ENCODE measurements at regions of chr3 and their contacts with region 1.

Region 1: DNA sequence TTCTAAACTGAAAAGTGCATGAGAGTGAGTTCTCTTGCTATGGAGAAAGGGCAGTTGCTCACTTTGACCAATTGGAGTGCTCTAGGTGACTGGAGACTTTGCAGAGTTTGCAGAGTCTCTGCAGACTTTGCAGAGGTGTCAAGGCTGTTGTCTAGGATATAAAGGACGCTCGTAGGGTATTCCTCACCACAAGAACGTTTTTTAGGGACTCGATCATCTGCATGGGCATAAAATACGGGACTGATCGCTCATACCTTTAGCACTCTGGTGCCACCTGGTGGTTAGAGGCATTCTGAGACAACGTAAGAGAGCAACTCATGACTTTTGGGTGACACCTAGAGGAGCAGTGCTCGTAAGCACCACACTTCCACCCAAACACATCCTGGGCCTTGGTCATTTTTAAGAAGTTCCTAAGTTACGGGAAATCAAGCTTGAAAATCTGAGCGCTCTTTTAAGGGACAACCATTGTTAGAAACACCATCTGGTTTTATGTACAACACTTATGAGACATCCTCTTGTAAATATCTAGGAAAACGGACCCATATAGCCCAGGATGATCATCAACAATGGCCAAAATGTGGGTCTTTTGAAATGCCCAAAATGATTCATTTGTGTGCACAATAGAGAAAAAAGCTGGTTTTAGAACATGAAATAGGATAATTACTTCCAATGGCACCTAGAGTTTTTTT is 51.6 kb upstream of the XCR1 start:
- DNase-seq: peak; percentile 97
- H3K4me3 Mint-ChIP-seq: no peak overlapping the region
- H3K27ac Mint-ChIP-seq: no peak overlapping the region
- H3K4me1 Mint-ChIP-seq: no peaks in the 10 kb centered on the region
- H3K27me3 Mint-ChIP-seq: peaks cover 14% of the 10 kb centered on the region

Region 2: GRCh38 chr3:45760878-45761711 is 317.8 kb before region 1 on chr3:
- CTCF ChIA-PET with region 1: interaction called, 18 read pairs
- intact Hi-C with region 1: loop called (anchors 1 kb)
- DNase-seq: peak; percentile 57
- H3K4me3 Mint-ChIP-seq: no peak overlapping the region
- H3K27ac Mint-ChIP-seq: no peak overlapping the region
- H3K4me1 Mint-ChIP-seq: no peaks in the 10 kb centered on the region
- H3K27me3 Mint-ChIP-seq: peaks cover 2% of the 10 kb centered on the region

Region 3: DNA sequence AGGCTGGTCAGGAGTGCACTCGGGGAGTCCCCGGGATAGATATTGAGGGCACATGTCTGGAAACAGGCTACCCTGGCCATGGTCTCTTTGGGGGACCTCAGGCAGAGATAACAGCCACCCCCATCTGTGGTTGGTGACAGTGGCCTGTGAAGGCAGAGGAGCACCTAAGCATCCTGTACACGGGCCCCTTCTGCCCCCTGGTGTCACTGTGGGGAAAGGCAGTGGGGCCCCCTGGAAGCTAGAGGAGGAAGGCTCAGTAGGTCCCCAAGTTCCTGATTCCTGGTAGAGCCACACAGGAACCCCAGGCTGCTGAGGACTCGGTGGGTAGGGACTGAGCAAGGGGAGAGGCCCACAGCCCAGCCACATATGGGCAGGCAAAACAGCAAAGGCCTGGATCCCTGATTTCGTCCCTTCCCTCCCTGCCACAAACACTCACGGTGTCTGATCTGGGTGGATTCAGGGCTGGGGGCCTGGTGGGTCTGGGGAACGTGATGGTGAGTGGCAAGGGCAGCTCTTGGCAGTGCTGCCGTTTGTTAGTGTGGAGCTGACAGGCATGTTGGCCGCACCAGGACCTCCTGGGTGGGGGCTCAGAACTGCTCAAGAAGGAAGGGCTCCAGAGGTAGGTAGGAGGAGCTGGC is 149.7 kb before region 1 on chr3:
- CTCF ChIA-PET with region 1: interaction called, 263 read pairs
- intact Hi-C with region 1: no loop called
- DNase-seq: peak; percentile 76
- H3K4me3 Mint-ChIP-seq: no peak overlapping the region
- H3K27ac Mint-ChIP-seq: no peak overlapping the region
- H3K4me1 Mint-ChIP-seq: no peaks in the 10 kb centered on the region
- H3K27me3 Mint-ChIP-seq: no peaks in the 10 kb centered on the region

Region 4: GRCh38 chr3:46065294-46065721 is 13.5 kb before region 1 on chr3:
- CTCF ChIA-PET with region 1: interaction called, 38 read pairs
- intact Hi-C with region 1: no loop called
- DNase-seq: peak; percentile 89
- H3K4me3 Mint-ChIP-seq: no peak overlapping the region
- H3K27ac Mint-ChIP-seq: no peak overlapping the region
- H3K4me1 Mint-ChIP-seq: peaks cover 67% of the 10 kb centered on the region
- H3K27me3 Mint-ChIP-seq: peaks cover 49% of the 10 kb centered on the region

Region 5: DNA sequence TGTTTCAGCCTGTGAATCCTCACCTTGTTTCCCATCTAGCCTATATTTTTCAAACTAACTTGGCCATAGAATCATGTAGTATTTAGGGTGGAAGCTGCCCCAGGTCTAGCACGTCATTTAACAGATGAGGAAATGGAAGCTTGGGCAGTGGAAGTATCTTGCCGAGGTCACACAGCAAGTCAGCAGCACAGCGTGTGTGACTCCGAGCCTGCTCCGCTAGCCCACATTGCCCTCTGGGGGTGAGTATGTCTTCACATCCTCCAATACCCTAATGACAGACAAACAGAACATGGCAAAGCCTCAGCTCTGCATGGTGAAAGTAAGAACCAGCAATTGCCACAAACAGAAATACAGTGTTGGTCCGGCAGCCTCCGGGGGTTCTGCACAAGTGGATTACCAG is 289.7 kb after region 1 on chr3:
- CTCF ChIA-PET with region 1: interaction called, 58 read pairs
- intact Hi-C with region 1: no loop called
- DNase-seq: peak; percentile 75
- H3K4me3 Mint-ChIP-seq: no peak overlapping the region
- H3K27ac Mint-ChIP-seq: no peak overlapping the region
- H3K4me1 Mint-ChIP-seq: peaks cover 21% of the 10 kb centered on the region
- H3K27me3 Mint-ChIP-seq: peaks cover 16% of the 10 kb centered on the region